ENCODE measurements at regions of chr18 and their contacts with region 1.

Region 1: DNA sequence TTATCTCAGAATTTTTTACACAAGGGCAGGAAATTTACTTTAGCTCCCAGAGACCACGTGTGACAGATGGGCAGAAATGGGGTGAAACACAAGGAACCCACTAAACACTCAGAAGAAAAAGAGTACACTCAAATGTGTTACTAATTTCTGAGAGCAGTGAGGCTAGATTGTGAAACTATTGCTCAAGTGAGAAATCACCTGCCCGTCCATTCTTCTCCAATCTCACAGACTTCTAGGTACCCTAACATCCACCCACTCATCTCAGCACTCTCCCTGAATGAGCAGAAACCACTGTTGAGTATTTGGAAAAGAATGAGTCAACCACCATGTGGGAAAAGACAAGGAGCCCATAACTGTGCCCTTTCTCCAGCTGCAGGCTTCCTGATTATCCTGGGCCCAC is 293.0 kb upstream of the CDH2 start:
- DNase-seq: no peak
- ATAC-seq: no peak
- H3K4me3 ChIP-seq: no peak overlapping the region
- H3K27ac ChIP-seq: no peak overlapping the region
- H3K4me1 ChIP-seq: peaks cover 0 to 7% (median 0%) of the 10 kb centered on the region in 12 donors
- H3K27me3 ChIP-seq: no peaks in the 10 kb centered on the region
- CTCF ChIP-seq: no peak
- POLR2A ChIP-seq: no peak

Region 2: DNA sequence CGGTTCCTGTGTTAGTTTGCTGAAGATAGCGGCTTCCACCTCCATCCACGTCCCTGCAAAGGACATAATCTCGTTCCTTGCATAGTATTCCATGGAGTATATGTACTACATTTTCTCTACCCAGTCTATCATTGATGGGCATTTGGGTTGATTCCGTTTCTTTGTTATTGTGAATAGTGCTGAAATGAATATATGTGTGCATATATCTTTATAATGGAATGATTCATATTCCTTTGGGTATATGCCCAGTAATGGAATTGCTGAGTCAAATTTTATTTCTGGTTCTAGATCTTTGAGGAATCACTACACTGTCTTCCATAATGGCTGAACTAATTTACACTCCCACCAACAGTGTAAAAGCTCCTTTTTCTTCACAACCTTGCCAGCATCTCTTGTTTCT is 37.6 kb before region 1 on chr18:
- intact Hi-C with region 1: loop called in 1 of 10 experiments (anchors 2 kb)
- DNase-seq: no peak
- ATAC-seq: no peak
- H3K4me3 ChIP-seq: no peak overlapping the region
- H3K27ac ChIP-seq: no peak overlapping the region
- H3K4me1 ChIP-seq: no peaks in the 10 kb centered on the region
- H3K27me3 ChIP-seq: no peaks in the 10 kb centered on the region
- CTCF ChIP-seq: no peak
- POLR2A ChIP-seq: no peak

Region 3: DNA sequence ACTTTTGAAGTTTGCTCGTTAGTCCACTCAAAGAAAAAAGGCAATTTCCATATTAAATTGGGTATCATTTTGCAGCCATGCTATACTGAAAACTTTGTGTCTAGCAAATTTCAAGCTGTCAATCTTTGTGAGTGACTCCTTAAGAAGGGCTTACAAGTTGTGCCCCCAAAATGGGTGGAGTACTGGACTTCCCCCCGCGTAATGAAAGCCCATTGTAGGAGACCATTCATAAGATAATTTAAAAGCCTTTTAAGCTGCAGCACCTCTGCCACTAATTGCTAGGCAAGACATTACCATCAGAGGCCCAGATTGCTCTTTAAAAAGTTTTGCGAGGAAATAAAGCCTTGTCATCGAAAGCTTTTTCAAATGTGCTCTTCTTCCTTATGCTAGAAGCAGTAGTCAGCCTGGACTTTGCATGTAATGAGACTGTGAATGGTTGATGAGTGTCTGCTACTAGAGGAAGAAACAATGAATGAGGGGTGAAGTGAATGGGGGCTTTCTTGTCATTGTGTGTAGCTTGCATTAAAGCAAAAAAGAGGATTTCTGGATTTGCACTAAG is 52.3 kb after region 1 on chr18:
- intact Hi-C with region 1: loop called in 1 of 10 experiments (anchors 10 kb)
- DNase-seq: no peak
- ATAC-seq: no peak
- H3K4me3 ChIP-seq: no peak overlapping the region
- H3K27ac ChIP-seq: no peak overlapping the region
- H3K4me1 ChIP-seq: no peaks in the 10 kb centered on the region
- H3K27me3 ChIP-seq: no peaks in the 10 kb centered on the region
- CTCF ChIP-seq: no peak
- POLR2A ChIP-seq: no peak

Region 4: DNA sequence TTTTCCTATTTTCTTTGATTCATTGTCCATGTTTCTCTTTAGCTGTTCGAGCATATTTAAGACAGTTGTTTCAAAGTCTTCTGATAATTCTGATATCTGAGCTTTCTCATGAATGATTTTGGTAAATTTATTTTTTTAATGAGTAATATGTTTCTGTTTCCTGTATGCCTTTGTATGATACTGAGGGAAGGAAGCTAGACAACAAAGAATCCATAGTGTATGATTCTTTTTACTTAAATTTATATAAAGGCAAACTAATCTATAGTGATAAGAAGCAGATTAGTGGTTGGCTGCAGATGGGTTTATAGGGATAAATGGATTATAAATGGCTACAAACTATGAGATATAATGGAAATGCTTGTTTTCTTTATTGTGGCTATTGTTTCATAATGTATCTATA is 59.7 kb after region 1 on chr18:
- intact Hi-C with region 1: loop called in 2 of 10 experiments (anchors 10 kb)
- DNase-seq: no peak
- ATAC-seq: no peak
- H3K4me3 ChIP-seq: no peak overlapping the region
- H3K27ac ChIP-seq: no peak overlapping the region
- H3K4me1 ChIP-seq: no peaks in the 10 kb centered on the region
- H3K27me3 ChIP-seq: no peaks in the 10 kb centered on the region
- CTCF ChIP-seq: no peak
- POLR2A ChIP-seq: no peak